ENCODE measurements at regions of chr4 and their contacts with region 1.

Region 1: GRCh38 chr4:142846729-142847596 is 862 bp upstream of the INPP4B start:
- DNase-seq: no peak
- ATAC-seq: peak; percentile 83
- H3K4me3 ChIP-seq: peak overlapping the region; percentile 50 to 52
- H3K27ac ChIP-seq: no peak overlapping the region
- H3K4me1 ChIP-seq: no peaks in the 10 kb centered on the region
- H3K27me3 ChIP-seq: no peaks in the 10 kb centered on the region
- CTCF ChIP-seq: peak; percentile 62

Region 2: DNA sequence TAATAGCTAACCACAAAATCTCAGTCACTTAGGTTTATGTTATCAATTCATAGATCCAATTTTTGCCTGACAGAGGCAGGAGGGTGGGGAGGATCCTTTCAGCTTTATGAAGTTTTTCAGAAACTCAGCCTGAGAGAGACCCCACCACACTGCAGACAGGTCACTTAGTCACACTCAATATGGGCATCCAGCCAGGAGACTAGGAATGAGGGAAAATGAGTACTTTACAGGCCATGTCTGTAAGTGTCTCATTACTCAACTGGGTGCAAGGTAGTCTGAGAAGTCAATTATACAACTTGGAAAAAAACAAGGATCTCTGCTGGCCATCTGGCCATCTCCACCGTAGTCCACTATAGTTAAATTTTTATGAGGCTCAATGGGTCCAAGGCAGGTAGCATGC is 366.7 kb before region 1 on chr4:
- CTCF ChIA-PET with region 1: no interaction called
- POLR2A ChIA-PET with region 1: no interaction called
- in situ Hi-C with region 1: no loop called
- intact Hi-C with region 1: loop called (anchors 10 kb)
- DNase-seq: no peak
- ATAC-seq: no peak
- H3K4me3 ChIP-seq: no peak overlapping the region
- H3K27ac ChIP-seq: no peak overlapping the region
- H3K4me1 ChIP-seq: no peaks in the 10 kb centered on the region
- H3K27me3 ChIP-seq: no peaks in the 10 kb centered on the region
- CTCF ChIP-seq: no peak

Region 3: GRCh38 chr4:142861351-142861750 is 14.4 kb after region 1 on chr4:
- CTCF ChIA-PET with region 1: no interaction called
- POLR2A ChIA-PET with region 1: no interaction called
- in situ Hi-C with region 1: no loop called
- intact Hi-C with region 1: no loop called
- DNase-seq: no peak
- ATAC-seq: no peak
- H3K4me3 ChIP-seq: no peak overlapping the region
- H3K27ac ChIP-seq: no peak overlapping the region
- H3K4me1 ChIP-seq: no peaks in the 10 kb centered on the region
- H3K27me3 ChIP-seq: no peaks in the 10 kb centered on the region
- CTCF ChIP-seq: no peak